ENCODE measurements at regions of chr5 and their contacts with region 1.

Region 1: DNA sequence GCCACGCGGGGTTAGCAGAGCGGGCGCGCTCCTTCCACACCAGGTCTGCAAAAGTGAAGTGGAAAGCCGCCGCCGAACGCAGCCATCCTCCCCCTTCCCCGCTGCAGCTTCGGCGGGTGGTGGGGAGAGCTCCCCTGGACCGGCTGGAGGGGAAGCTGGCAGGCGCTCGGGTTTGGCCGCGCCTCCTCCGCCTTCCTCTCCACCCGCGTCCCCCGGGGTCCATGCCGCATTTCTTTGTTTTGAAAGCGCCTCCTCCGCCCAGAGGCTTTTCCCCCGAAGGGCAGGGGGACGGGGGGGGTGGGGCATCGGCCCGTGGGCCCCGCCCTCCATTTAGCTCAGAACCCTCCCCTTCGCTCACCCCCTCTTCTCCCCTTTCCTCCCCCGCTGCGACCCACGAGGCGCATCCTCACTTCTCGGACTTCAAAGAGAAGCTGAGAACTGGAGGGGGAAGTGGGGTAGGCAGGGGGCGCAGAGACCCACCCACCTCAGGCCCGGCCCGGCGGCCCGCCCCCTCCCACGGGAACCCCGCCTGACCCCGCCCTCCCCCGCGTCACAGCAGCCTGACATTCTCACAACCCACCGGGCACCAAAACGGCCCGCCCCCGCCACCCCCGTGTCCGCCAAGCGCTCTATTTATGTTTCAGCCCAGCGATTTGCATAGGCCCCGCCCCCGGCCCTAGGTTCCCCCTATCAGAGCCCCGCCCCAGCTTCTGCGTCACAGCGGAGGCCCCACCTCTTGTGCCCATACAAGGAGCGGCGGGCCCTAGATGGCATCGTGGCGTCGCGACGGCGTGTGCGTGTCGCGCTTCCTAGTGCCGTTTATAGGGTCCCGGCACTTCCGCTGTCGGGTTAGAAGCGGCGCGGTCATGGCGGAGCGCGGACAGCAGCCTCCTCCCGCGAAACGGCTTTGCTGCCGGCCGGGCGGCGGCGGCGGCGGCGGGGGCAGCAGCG is at the start of gene ZSWIM6:
- DNase-seq: peak; percentile 62
- ATAC-seq: peak; percentile 72
- H3K4me3 ChIP-seq: peak within 1 kb of the TSS; percentile 76
- H3K27ac ChIP-seq: no peak within 1 kb of the TSS
- H3K4me1 ChIP-seq: peaks cover 18% of the 10 kb centered on the region
- H3K27me3 ChIP-seq: peaks cover 0 to 17% of the 10 kb centered on the region in 2 experiments; a peak in 2 of 4 replicates
- CTCF ChIP-seq: no peak
- EP300 ChIP-seq: no peak
- POLR2A ChIP-seq: peak; percentile 94
- RAD21 ChIP-seq: no peak; the same call in 1 of the 2 replicates
- polyA plus RNA-seq, gene ZSWIM6: 1.5 to 2.1 TPM

Region 2: GRCh38 chr5:60944904-60945812 is 386.5 kb before region 1 on chr5 and contains the starts of genes ERCC8 and NDUFAF2:
- CTCF ChIA-PET with region 1: no interaction called
- POLR2A ChIA-PET with region 1: interaction called, 3 read pairs
- RAD21 ChIA-PET with region 1: no interaction called
- SMC1A ChIA-PET with region 1: no interaction called
- in situ Hi-C with region 1: no loop called
- intact Hi-C with region 1: loop called (anchors 5 kb)
- DNase-seq: peak; percentile 73
- ATAC-seq: peak; percentile 98
- H3K4me3 ChIP-seq: peak within 1 kb of the TSS; percentile 98
- H3K27ac ChIP-seq: peak within 1 kb of the TSS; percentile 83
- H3K4me1 ChIP-seq: no peaks in the 10 kb centered on the region
- H3K27me3 ChIP-seq: no peaks in the 10 kb centered on the region
- CTCF ChIP-seq: no peak
- EP300 ChIP-seq: no peak
- POLR2A ChIP-seq: peak; percentile 78
- RAD21 ChIP-seq: no peak
- polyA plus RNA-seq, gene ERCC8: 16.8 to 31.2 TPM
- polyA plus RNA-seq, gene NDUFAF2: 111 to 121 TPM

Region 3: DNA sequence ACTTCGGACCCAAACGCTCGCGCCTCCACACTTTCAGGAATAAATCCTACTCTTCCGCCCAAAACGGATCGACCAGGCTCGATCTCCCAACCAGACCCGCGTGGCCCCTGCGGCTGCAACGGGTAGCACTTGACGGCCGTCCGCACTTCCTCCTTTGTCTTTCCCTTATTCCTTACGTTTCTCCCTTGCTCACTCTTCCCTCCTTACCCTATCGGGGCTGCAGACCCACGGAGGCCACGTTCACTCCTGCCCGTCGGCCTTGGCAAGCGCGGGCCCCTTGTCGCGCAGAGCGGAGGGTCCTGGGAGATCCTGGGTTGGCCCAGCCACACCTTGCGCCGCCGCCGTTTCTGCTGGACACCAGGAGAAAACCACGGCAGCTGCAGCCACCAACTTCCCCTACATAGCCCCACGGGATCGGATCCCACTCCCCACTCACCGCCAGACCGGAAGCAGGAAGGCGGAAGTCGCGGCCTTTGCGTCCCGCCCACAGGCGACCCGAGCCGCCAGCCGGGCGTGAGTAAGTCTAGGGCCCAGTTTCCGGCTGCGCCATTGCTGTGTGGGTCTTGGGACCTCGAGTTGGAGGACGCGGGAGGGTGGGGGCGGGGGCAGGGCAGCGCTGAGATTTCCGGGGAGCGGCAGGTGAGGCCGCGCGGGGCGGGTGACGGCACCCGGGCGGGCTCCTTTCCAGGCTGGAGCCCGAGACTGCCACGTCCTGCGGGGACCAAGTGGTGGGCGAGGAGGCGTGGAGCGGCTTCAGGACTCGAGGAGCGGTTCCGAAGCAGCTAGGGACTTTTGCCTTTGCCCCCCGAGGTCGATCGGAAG is 169.5 kb before region 1 on chr5 and contains the start of gene SMIM15:
- CTCF ChIA-PET with region 1: interaction called, 5 read pairs
- POLR2A ChIA-PET with region 1: interaction called, 5 read pairs
- RAD21 ChIA-PET with region 1: interaction called, 3 read pairs
- SMC1A ChIA-PET with region 1: interaction called, 16 read pairs
- in situ Hi-C with region 1: loop called (anchors 10 kb)
- intact Hi-C with region 1: loop called (anchors 2 kb)
- DNase-seq: peak; percentile 54
- ATAC-seq: peak; percentile 94
- H3K4me3 ChIP-seq: peak within 1 kb of the TSS; percentile 73
- H3K27ac ChIP-seq: peak within 1 kb of the TSS; percentile 98
- H3K4me1 ChIP-seq: no peaks in the 10 kb centered on the region; the same call in 1 of the 2 replicates
- H3K27me3 ChIP-seq: no peaks in the 10 kb centered on the region
- CTCF ChIP-seq: no peak
- EP300 ChIP-seq: no peak
- POLR2A ChIP-seq: peak; percentile 99
- RAD21 ChIP-seq: no peak
- polyA plus RNA-seq, gene SMIM15: 13.8 to 18.7 TPM

Region 4: GRCh38 chr5:61200582-61201155 is 131.0 kb before region 1 on chr5:
- CTCF ChIA-PET with region 1: interaction called, 27 read pairs
- POLR2A ChIA-PET with region 1: interaction called, 7 read pairs
- RAD21 ChIA-PET with region 1: interaction called, 64 read pairs
- SMC1A ChIA-PET with region 1: interaction called, 30 read pairs
- in situ Hi-C with region 1: no loop called
- intact Hi-C with region 1: loop called (anchors 1 kb)
- DNase-seq: peak; percentile 51
- ATAC-seq: peak; percentile 83
- H3K4me3 ChIP-seq: no peak overlapping the region
- H3K27ac ChIP-seq: peak overlapping the region; percentile 28; the same call in 1 of the 2 replicates
- H3K4me1 ChIP-seq: peaks cover 2% of the 10 kb centered on the region; the same call in 1 of the 2 replicates
- H3K27me3 ChIP-seq: no peaks in the 10 kb centered on the region
- CTCF ChIP-seq: no peak
- EP300 ChIP-seq: peak in 1 of 2 experiments; percentile 48; a peak in 2 of 4 replicates
- POLR2A ChIP-seq: no peak
- RAD21 ChIP-seq: no peak

Region 5: GRCh38 chr5:61319388-61320146 is 12.1 kb before region 1 on chr5:
- CTCF ChIA-PET with region 1: interaction called, 16 read pairs
- POLR2A ChIA-PET with region 1: interaction called, 20 read pairs
- RAD21 ChIA-PET with region 1: interaction called, 29 read pairs
- SMC1A ChIA-PET with region 1: interaction called, 31 read pairs
- in situ Hi-C with region 1: no loop called
- intact Hi-C with region 1: loop called (anchors 1 kb)
- DNase-seq: peak; percentile 88
- ATAC-seq: peak; percentile 99
- H3K4me3 ChIP-seq: peak overlapping the region; percentile 42; the same call in 1 of the 2 replicates
- H3K27ac ChIP-seq: peak overlapping the region; percentile 61
- H3K4me1 ChIP-seq: peaks cover 26% of the 10 kb centered on the region
- H3K27me3 ChIP-seq: 0 out of 4 replicates have a peak, but pooled peaks cover 0 to 5% of the 10 kb centered on the region in 2 experiments
- CTCF ChIP-seq: no peak
- EP300 ChIP-seq: peak; percentile 80 to 83; a peak in 3 of 4 replicates
- POLR2A ChIP-seq: no peak
- RAD21 ChIP-seq: peak; percentile 31; the same call in 1 of the 2 replicates

Region 6: GRCh38 chr5:61408476-61409168 is 76.9 kb after region 1 on chr5:
- CTCF ChIA-PET with region 1: interaction called, 8 read pairs
- POLR2A ChIA-PET with region 1: interaction called, 3 read pairs
- RAD21 ChIA-PET with region 1: interaction called, 5 read pairs
- SMC1A ChIA-PET with region 1: no interaction called
- in situ Hi-C with region 1: no loop called
- intact Hi-C with region 1: loop called (anchors 2 kb)
- DNase-seq: peak; percentile 61
- ATAC-seq: peak; percentile 99
- H3K4me3 ChIP-seq: peak overlapping the region; percentile 45; the same call in 1 of the 2 replicates
- H3K27ac ChIP-seq: no peak overlapping the region
- H3K4me1 ChIP-seq: no peaks in the 10 kb centered on the region; the same call in 1 of the 2 replicates
- H3K27me3 ChIP-seq: no peaks in the 10 kb centered on the region
- CTCF ChIP-seq: no peak
- EP300 ChIP-seq: peak; percentile 78 to 82; a peak in 3 of 4 replicates
- POLR2A ChIP-seq: no peak
- RAD21 ChIP-seq: no peak

Region 7: GRCh38 chr5:61658592-61659008 is 326.9 kb after region 1 on chr5:
- CTCF ChIA-PET with region 1: interaction called, 9 read pairs
- POLR2A ChIA-PET with region 1: no interaction called
- RAD21 ChIA-PET with region 1: interaction called, 11 read pairs
- SMC1A ChIA-PET with region 1: interaction called, 3 read pairs
- in situ Hi-C with region 1: no loop called
- intact Hi-C with region 1: loop called (anchors 1 kb)
- DNase-seq: peak; percentile 21
- ATAC-seq: peak; percentile 97
- H3K4me3 ChIP-seq: no peak overlapping the region
- H3K27ac ChIP-seq: no peak overlapping the region
- H3K4me1 ChIP-seq: no peaks in the 10 kb centered on the region
- H3K27me3 ChIP-seq: no peaks in the 10 kb centered on the region; a peak in 3 of 4 replicates
- CTCF ChIP-seq: peak; percentile 88 to 95 (median 93)
- EP300 ChIP-seq: no peak
- POLR2A ChIP-seq: no peak
- RAD21 ChIP-seq: peak; percentile 89